ENCODE measurements at regions of chr2 and their contacts with region 1.

Region 1: GRCh38 chr2:159939946-159940345 is 122.5 kb downstream of the PLA2R1 start:
- DNase-seq: peak; percentile 32
- ATAC-seq: peak; percentile 94
- H3K4me3 ChIP-seq: no peak overlapping the region
- H3K27ac ChIP-seq: no peak overlapping the region
- H3K4me1 ChIP-seq: 0 out of 2 replicates have a peak, but pooled peaks cover 1% of the 10 kb centered on the region
- H3K27me3 ChIP-seq: no peaks in the 10 kb centered on the region
- CTCF ChIP-seq: peak; percentile 57 to 82 (median 62); a peak in 5 of 6 replicates
- EP300 ChIP-seq: no peak
- POLR2A ChIP-seq: no peak
- RAD21 ChIP-seq: peak; percentile 88

Region 2: GRCh38 chr2:159712143-159712928 is 227.6 kb before region 1 on chr2 and contains the start of gene MARCHF7:
- CTCF ChIA-PET with region 1: interaction called, 18 read pairs
- POLR2A ChIA-PET with region 1: interaction called, 3 read pairs
- RAD21 ChIA-PET with region 1: interaction called, 20 read pairs
- SMC1A ChIA-PET with region 1: interaction called, 7 read pairs
- in situ Hi-C with region 1: no loop called
- intact Hi-C with region 1: no loop called
- DNase-seq: peak; percentile 79
- ATAC-seq: peak; percentile 92
- H3K4me3 ChIP-seq: peak within 1 kb of the TSS; percentile 99
- H3K27ac ChIP-seq: peak within 1 kb of the TSS; percentile 99
- H3K4me1 ChIP-seq: peaks cover 3% of the 10 kb centered on the region; the same call in 1 of the 2 replicates
- H3K27me3 ChIP-seq: no peaks in the 10 kb centered on the region
- CTCF ChIP-seq: peak; percentile 57 to 74 (median 63)
- EP300 ChIP-seq: 0 out of 4 replicates have a peak, but pooled peaks of 1 of the 2 experiments have one; percentile 11
- POLR2A ChIP-seq: peak; percentile 99
- RAD21 ChIP-seq: peak; percentile 63
- polyA plus RNA-seq, gene MARCHF7: 39.4 to 56.3 TPM

Region 3: GRCh38 chr2:159807183-159808031 is 132.5 kb before region 1 on chr2:
- CTCF ChIA-PET with region 1: interaction called, 29 read pairs
- POLR2A ChIA-PET with region 1: no interaction called
- RAD21 ChIA-PET with region 1: interaction called, 7 read pairs
- SMC1A ChIA-PET with region 1: interaction called, 16 read pairs
- in situ Hi-C with region 1: no loop called
- intact Hi-C with region 1: no loop called
- DNase-seq: no peak
- ATAC-seq: peak; percentile 64
- H3K4me3 ChIP-seq: no peak overlapping the region
- H3K27ac ChIP-seq: no peak overlapping the region
- H3K4me1 ChIP-seq: no peaks in the 10 kb centered on the region
- H3K27me3 ChIP-seq: no peaks in the 10 kb centered on the region
- CTCF ChIP-seq: peak; percentile 48 to 54 (median 53)
- EP300 ChIP-seq: no peak
- POLR2A ChIP-seq: no peak
- RAD21 ChIP-seq: peak; percentile 69

Region 4: GRCh38 chr2:159853101-159853500 is 86.8 kb before region 1 on chr2:
- CTCF ChIA-PET with region 1: interaction called, 9 read pairs
- POLR2A ChIA-PET with region 1: no interaction called
- RAD21 ChIA-PET with region 1: interaction called, 5 read pairs
- SMC1A ChIA-PET with region 1: interaction called, 10 read pairs
- in situ Hi-C with region 1: no loop called
- intact Hi-C with region 1: no loop called
- DNase-seq: no peak
- ATAC-seq: no peak
- H3K4me3 ChIP-seq: no peak overlapping the region
- H3K27ac ChIP-seq: no peak overlapping the region
- H3K4me1 ChIP-seq: no peaks in the 10 kb centered on the region
- H3K27me3 ChIP-seq: no peaks in the 10 kb centered on the region
- CTCF ChIP-seq: no peak
- EP300 ChIP-seq: no peak
- POLR2A ChIP-seq: no peak
- RAD21 ChIP-seq: no peak

Region 5: DNA sequence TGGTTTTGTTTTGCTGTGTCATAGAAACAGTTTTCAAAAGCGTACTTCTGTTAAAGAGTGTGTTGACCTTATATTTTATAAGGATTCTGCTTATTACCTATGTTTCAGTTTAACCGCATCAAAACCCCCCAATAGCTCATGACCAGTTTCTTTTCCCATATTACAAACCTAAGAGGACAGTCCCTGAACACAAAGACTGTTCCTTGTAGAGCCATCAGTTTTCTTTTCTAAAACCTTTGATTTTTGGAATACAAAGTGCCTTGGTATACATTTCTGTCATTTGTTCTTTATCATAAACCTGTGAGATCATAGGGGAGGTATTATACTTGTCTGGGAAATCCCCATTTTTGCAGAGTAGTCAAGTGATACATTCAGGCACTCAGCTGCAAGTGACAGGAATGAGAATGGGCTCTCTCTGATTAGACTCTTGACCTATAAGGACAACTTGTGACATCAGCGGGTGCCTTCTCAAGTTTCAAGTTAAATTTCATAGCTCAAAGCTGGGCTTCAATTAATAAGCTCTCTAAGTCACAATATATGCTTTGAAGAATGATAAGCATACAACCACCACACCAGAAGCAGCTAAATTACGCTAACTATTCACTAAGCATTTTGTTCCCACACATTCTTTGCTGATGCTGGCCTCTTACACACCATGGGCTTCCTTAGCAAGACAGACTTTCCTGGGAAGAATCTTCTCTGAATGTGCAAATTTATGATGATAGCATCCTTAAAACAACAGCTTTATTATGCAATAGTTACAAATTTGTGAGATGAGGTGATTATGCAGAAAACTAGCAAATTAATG is 44.5 kb before region 1 on chr2:
- CTCF ChIA-PET with region 1: interaction called, 72 read pairs
- POLR2A ChIA-PET with region 1: interaction called, 840 read pairs
- RAD21 ChIA-PET with region 1: interaction called, 39 read pairs
- SMC1A ChIA-PET with region 1: interaction called, 1,536 read pairs
- in situ Hi-C with region 1: no loop called
- intact Hi-C with region 1: no loop called
- DNase-seq: no peak
- ATAC-seq: peak; percentile 62
- H3K4me3 ChIP-seq: peak overlapping the region; percentile 32
- H3K27ac ChIP-seq: peak overlapping the region; percentile 83
- H3K4me1 ChIP-seq: peaks cover 89% of the 10 kb centered on the region
- H3K27me3 ChIP-seq: no peaks in the 10 kb centered on the region
- CTCF ChIP-seq: no peak
- EP300 ChIP-seq: peak; percentile 84 to 92; a peak in 3 of 4 replicates
- POLR2A ChIP-seq: peak; percentile 21; the same call in 1 of the 2 replicates
- RAD21 ChIP-seq: no peak

Region 6: GRCh38 chr2:159960383-159960782 is 20.4 kb after region 1 on chr2:
- CTCF ChIA-PET with region 1: interaction called, 27 read pairs
- POLR2A ChIA-PET with region 1: interaction called, 6 read pairs
- RAD21 ChIA-PET with region 1: interaction called, 6 read pairs
- SMC1A ChIA-PET with region 1: interaction called, 7 read pairs
- in situ Hi-C with region 1: no loop called
- intact Hi-C with region 1: no loop called
- DNase-seq: peak; percentile 44
- ATAC-seq: peak; percentile 67
- H3K4me3 ChIP-seq: no peak overlapping the region
- H3K27ac ChIP-seq: peak overlapping the region; percentile 24; the same call in 1 of the 2 replicates
- H3K4me1 ChIP-seq: peaks cover 25% of the 10 kb centered on the region
- H3K27me3 ChIP-seq: no peaks in the 10 kb centered on the region
- CTCF ChIP-seq: no peak
- EP300 ChIP-seq: no peak; a peak in 1 of 4 replicates
- POLR2A ChIP-seq: no peak
- RAD21 ChIP-seq: no peak